ENCODE measurements at regions of chr6 and their contacts with region 1.

Region 1: GRCh38 chr6:2999618-3000557 is at the start of gene NQO2:
- DNase-seq: peak; percentile 96
- ATAC-seq: peak; percentile 80
- H3K4me3 Mint-ChIP-seq: peak within 1 kb of the TSS; percentile 83
- H3K27ac Mint-ChIP-seq: peak within 1 kb of the TSS; percentile 82
- H3K4me1 Mint-ChIP-seq: peaks cover 28% of the 10 kb centered on the region
- H3K27me3 Mint-ChIP-seq: no peaks in the 10 kb centered on the region
- total RNA-seq, gene NQO2: 40.7 to 44.2 TPM

Region 2: GRCh38 chr6:2841264-2842138 is 158.4 kb before region 1 on chr6 and contains the start of gene SERPINB1:
- CTCF ChIA-PET with region 1: interaction called, 4 read pairs
- POLR2A ChIA-PET with region 1: interaction called, 4 read pairs
- intact Hi-C with region 1: loop called in 1 of 2 experiments (anchors 1 kb)
- DNase-seq: peak; percentile 96
- ATAC-seq: peak; percentile 86
- H3K4me3 Mint-ChIP-seq: peak within 1 kb of the TSS; percentile 96
- H3K27ac Mint-ChIP-seq: peak within 1 kb of the TSS; percentile 91
- H3K4me1 Mint-ChIP-seq: peaks cover 67% of the 10 kb centered on the region
- H3K27me3 Mint-ChIP-seq: no peaks in the 10 kb centered on the region
- total RNA-seq, gene SERPINB1: 200 to 243 TPM

Region 3: GRCh38 chr6:3052481-3053230 is 52.8 kb after region 1 on chr6:
- CTCF ChIA-PET with region 1: interaction called, 36 read pairs
- POLR2A ChIA-PET with region 1: no interaction called
- intact Hi-C with region 1: loop called (anchors 1 kb)
- DNase-seq: no peak
- ATAC-seq: no peak
- H3K4me3 Mint-ChIP-seq: peak overlapping the region; percentile 69
- H3K27ac Mint-ChIP-seq: no peak overlapping the region
- H3K4me1 Mint-ChIP-seq: peaks cover 15% of the 10 kb centered on the region
- H3K27me3 Mint-ChIP-seq: no peaks in the 10 kb centered on the region

Region 4: DNA sequence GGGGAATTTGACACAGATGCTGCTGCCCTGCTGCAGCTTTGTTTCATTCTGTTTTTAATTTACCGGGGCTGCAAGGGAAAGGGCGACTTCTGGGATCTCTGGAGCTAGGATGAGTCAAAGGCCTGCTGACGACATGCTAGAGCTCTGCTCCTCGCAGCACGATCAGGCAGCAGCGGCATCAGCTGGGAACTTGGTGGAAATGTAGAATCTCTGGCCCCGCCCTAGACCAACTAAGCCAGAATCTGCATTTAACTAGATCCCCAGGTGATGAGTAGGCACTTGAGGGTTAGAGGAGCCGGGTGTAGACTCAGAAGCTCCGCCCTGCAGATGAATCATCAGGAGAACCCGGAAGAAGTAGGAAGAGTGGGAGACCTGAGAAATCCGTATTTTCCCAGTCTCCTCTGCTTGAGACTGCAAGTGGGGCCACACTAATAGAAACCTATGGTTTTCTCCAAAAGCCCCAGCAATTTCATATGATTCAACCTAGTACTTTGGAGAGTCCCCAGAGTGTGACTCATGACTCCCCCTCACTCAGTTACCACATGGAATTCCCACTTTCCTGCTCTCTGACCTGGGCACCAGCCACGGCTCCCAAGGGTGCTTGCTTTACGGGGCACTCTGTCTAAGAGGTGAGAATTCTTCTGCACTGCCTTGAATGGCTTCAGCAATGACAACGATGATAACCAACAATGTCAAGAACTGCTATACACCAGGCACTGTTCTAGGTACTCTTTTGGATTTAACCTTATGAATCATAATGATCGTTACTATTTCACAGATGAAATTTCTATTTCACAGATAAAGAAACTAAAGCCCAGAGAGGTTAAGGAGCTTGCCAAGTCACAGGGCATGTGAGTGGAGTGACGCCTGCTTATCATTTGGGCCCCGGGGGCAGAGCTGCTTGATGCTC is 209.5 kb after region 1 on chr6:
- CTCF ChIA-PET with region 1: no interaction called
- POLR2A ChIA-PET with region 1: no interaction called
- intact Hi-C with region 1: loop called in 1 of 2 experiments (anchors 2 kb)
- DNase-seq: peak; percentile 80
- ATAC-seq: peak; percentile 87
- H3K4me3 Mint-ChIP-seq: peak overlapping the region; percentile 32
- H3K27ac Mint-ChIP-seq: peak overlapping the region; percentile 86
- H3K4me1 Mint-ChIP-seq: peaks cover 28% of the 10 kb centered on the region
- H3K27me3 Mint-ChIP-seq: peaks cover 34% of the 10 kb centered on the region

Region 5: DNA sequence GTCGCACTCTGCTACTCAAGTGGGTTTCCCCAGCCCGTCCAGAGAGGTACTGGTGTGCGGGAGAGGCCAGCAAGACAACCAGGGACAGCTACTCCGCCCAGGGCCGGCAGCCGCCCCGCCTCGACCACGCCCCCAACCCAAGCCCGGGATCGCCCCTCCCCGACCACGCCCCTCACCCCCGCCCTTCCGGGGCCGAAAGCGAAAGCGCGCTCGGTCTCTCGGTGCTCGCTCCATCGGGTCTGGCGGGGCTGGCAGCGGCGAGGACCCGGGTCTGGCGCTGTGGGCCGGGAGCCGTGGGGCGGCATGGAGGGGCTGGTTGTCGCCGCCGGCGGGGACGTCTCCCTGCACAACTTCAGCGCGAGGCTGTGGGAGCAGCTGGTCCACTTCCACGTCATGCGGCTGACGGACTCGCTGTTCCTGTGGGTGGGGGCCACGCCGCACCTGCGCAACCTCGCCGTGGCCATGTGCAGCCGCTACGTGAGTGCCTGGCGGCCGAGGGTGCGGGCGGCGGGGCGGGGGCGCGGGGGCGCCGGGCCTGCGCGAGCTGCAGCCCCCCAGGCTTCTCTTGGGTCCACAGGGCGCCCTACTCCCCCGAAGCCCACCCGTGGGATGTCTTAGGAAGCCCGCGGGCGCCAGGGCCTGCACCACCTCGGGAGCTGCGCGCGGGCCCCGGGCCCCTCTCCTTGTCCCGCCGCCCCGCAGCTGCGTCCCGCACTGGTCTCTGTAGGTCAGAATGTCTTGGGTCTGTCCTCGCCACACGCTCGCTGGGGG is 259.0 kb after region 1 on chr6 and contains the start of gene PSMG4:
- CTCF ChIA-PET with region 1: no interaction called
- POLR2A ChIA-PET with region 1: no interaction called
- intact Hi-C with region 1: loop called in 1 of 2 experiments (anchors 1 kb)
- DNase-seq: peak; percentile 97
- ATAC-seq: peak; percentile 83
- H3K4me3 Mint-ChIP-seq: peak within 1 kb of the TSS; percentile 89
- H3K27ac Mint-ChIP-seq: peak within 1 kb of the TSS; percentile 92
- H3K4me1 Mint-ChIP-seq: peaks cover 35% of the 10 kb centered on the region
- H3K27me3 Mint-ChIP-seq: peaks cover 3% of the 10 kb centered on the region
- total RNA-seq, gene PSMG4: 22.2 to 23.2 TPM

Region 6: DNA sequence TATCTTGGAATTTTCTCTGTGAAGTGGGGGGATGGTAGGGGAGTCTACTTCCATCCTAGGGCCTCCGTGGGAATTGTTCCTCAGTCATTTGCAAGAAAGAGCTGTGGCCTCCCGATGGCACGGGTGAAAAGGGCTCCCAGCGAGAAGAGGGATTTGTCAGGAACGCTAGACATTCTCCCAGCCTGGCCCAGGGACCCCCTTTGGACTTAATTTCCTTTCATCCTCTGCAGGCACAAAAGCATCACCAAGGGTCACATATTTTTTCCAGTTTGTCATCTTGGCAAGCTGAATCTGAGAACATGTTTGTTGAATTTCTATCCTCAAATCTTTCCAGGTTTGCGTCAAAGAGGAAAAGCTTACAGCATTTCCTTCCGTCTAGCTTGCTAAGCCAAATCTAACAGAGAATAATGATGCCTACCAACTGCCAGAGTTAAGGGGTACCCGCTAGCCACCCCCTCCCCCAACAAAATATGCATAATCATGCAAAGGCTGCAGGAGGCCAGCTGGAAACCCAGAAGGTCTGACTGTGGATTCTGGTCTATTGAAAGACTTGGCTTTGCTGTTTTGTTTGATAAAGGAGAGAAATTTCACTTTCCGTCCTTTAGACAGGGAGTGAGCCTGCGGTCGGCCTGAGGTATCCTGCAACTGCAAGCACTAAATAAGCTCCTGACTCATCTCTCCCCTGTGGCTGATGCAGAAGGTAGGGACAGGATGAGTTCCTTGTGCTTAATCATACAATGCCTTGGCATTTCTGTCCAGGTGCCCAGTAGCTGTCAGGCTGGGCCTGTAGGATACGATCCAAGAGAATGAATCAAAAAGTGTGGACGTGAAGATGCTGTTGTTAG is 282.0 kb after region 1 on chr6:
- CTCF ChIA-PET with region 1: no interaction called
- POLR2A ChIA-PET with region 1: no interaction called
- intact Hi-C with region 1: no loop called
- DNase-seq: no peak
- ATAC-seq: no peak
- H3K4me3 Mint-ChIP-seq: no peak overlapping the region
- H3K27ac Mint-ChIP-seq: no peak overlapping the region
- H3K4me1 Mint-ChIP-seq: peaks cover 3% of the 10 kb centered on the region
- H3K27me3 Mint-ChIP-seq: no peaks in the 10 kb centered on the region

Region 7: GRCh38 chr6:3721810-3722626 is 722.1 kb after region 1 on chr6:
- CTCF ChIA-PET with region 1: no interaction called
- POLR2A ChIA-PET with region 1: no interaction called
- intact Hi-C with region 1: no loop called
- DNase-seq: no peak
- ATAC-seq: no peak
- H3K4me3 Mint-ChIP-seq: no peak overlapping the region
- H3K27ac Mint-ChIP-seq: no peak overlapping the region
- H3K4me1 Mint-ChIP-seq: no peaks in the 10 kb centered on the region
- H3K27me3 Mint-ChIP-seq: peaks cover 3% of the 10 kb centered on the region